Caco-2 (cell line): ENCODE measurements at regions of chr18 and their contacts with region 1.

Region 1: DNA sequence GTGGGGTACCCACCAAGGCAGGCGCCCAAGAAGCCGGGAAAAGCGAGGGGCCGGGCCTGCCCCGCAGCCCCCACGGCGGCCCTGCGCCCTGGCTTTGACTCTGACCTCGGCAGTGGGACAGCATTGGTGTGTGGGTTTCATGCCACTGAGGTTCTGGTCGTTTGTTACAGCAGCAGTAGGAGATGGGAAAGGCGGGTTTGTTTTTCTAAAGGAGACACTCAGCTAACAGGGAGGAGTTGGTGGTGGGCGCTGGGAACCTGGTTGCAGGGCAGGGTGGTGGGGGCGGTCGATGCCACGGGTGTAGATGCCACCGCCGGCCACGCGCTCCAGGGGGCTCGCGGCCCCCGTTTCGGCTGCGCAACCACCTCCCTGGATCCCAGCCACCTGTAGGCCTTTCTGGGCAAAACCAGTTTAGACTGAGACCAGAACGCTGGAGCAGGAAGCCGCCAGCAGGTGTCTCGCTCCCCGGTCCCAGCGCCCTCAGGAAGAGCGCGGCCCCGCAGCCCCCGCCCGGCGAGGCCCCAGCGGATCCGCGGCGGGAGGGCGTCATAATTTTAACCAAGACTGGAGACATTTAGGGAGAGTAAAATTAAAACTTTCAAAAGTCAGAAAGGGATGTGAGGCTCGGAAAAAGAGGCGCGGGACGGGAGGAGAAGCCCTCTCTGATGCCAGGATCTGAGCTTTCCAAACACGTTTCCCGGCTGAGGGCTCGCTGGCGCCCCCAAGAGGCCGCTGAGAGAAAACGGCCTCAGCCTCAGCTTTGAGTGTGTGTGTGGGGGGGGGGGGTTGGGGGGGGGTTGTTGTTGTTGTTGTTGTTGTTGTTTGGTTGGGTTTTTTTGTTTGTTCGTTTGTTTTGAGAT is 17.4 kb downstream of the CIDEA start:
- DNase-seq: peak; percentile 81 to 88
- H3K4me3 ChIP-seq: peak overlapping the region; percentile 44
- H3K4me3 Mint-ChIP-seq: peak overlapping the region; percentile 79
- H3K27ac Mint-ChIP-seq: peak overlapping the region; percentile 56
- H3K4me1 ChIP-seq: no peaks in the 10 kb centered on the region
- H3K4me1 Mint-ChIP-seq: no peaks in the 10 kb centered on the region
- H3K27me3 ChIP-seq: no peaks in the 10 kb centered on the region
- H3K27me3 Mint-ChIP-seq: no peaks in the 10 kb centered on the region
- CTCF ChIP-seq: peak; percentile 80 to 84

Region 2: GRCh38 chr18:12255626-12256026 is 16.0 kb before region 1 on chr18:
- CTCF ChIA-PET with region 1: interaction called, 17 read pairs
- POLR2A ChIA-PET with region 1: interaction called, 3 read pairs
- intact Hi-C with region 1: no loop called
- DNase-seq: peak in 1 of 2 experiments; percentile 47
- H3K4me3 ChIP-seq: no peak overlapping the region
- H3K4me3 Mint-ChIP-seq: no peak overlapping the region
- H3K27ac Mint-ChIP-seq: peak overlapping the region; percentile 14
- H3K4me1 ChIP-seq: peaks cover 17% of the 10 kb centered on the region
- H3K4me1 Mint-ChIP-seq: no peaks in the 10 kb centered on the region
- H3K27me3 ChIP-seq: no peaks in the 10 kb centered on the region
- H3K27me3 Mint-ChIP-seq: no peaks in the 10 kb centered on the region
- CTCF ChIP-seq: no peak

Region 3: GRCh38 chr18:12327510-12328178 is 56.0 kb after region 1 on chr18:
- CTCF ChIA-PET with region 1: interaction called, 7 read pairs
- POLR2A ChIA-PET with region 1: no interaction called
- intact Hi-C with region 1: loop called (anchors 1 kb)
- DNase-seq: peak; percentile 77 to 86
- H3K4me3 ChIP-seq: no peak overlapping the region
- H3K4me3 Mint-ChIP-seq: no peak overlapping the region
- H3K27ac Mint-ChIP-seq: peak overlapping the region; percentile 22
- H3K4me1 ChIP-seq: no peaks in the 10 kb centered on the region
- H3K4me1 Mint-ChIP-seq: no peaks in the 10 kb centered on the region
- H3K27me3 ChIP-seq: no peaks in the 10 kb centered on the region
- H3K27me3 Mint-ChIP-seq: no peaks in the 10 kb centered on the region
- CTCF ChIP-seq: peak; percentile 80 to 82